Heart right ventricle (tissue), 16 donors: ENCODE measurements at regions of chr5 and their contacts with region 1.

Region 1: GRCh38 chr5:75668977-75669689 is 48.1 kb downstream of the POC5 start:
- DNase-seq: peak in 1 of 2 donors; percentile 29
- ATAC-seq: peak; percentile 64 to 90 (median 73)
- H3K4me3 ChIP-seq: peak overlapping the region in 6 of 10 donors; percentile 18 to 39 (median 26)
- H3K27ac ChIP-seq: peak overlapping the region in 3 of 10 donors; percentile 1 to 45 (median 21)
- H3K4me1 ChIP-seq: peaks cover 0 to 21% (median 12%) of the 10 kb centered on the region in 9 donors
- H3K27me3 ChIP-seq: no peaks in the 10 kb centered on the region
- CTCF ChIP-seq: no peak

Region 2: DNA sequence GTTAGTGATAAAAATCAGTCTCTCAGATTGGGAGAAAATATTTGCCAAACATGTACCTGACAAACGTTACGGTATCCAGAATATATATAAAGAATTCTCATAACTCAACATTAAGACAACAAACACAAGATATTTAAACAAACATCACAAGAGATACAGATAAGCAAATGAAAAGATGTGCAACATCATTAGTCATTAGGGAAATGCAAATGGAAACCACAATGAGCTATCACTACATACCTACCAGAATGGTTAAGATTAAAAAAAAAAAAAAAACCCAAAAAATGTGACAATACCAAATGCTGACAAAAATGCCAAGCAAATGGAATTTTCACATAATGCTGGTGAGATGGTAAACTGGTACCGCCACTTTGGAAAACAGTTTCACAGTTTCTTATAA is 173.1 kb before region 1 on chr5:
- intact Hi-C with region 1: loop called in 1 of 10 experiments (anchors 10 kb)
- DNase-seq: no peak
- ATAC-seq: no peak
- H3K4me3 ChIP-seq: no peak overlapping the region
- H3K27ac ChIP-seq: no peak overlapping the region
- H3K4me1 ChIP-seq: peaks cover 0 to 6% (median 0%) of the 10 kb centered on the region in 9 donors
- H3K27me3 ChIP-seq: no peaks in the 10 kb centered on the region
- CTCF ChIP-seq: no peak